ENCODE measurements at regions of chr20 and their contacts with region 1.

Region 1: GRCh38 chr20:39574061-39574460 is 611.9 kb downstream of the DHX35 start:
- DNase-seq: peak; percentile 66
- H3K4me3 ChIP-seq: peak overlapping the region in 1 of 3 experiments; percentile 21
- H3K27ac ChIP-seq: peak overlapping the region; percentile 28
- H3K4me1 ChIP-seq: peaks cover 26% of the 10 kb centered on the region
- H3K27me3 ChIP-seq: no peaks in the 10 kb centered on the region
- CTCF ChIP-seq: no peak
- POLR2A ChIP-seq: no peak

Region 2: GRCh38 chr20:39347626-39348025 is 226.4 kb before region 1 on chr20:
- CTCF ChIA-PET with region 1: no interaction called
- POLR2A ChIA-PET with region 1: no interaction called
- dilution Hi-C with region 1: no loop called
- intact Hi-C with region 1: no loop called
- DNase-seq: no peak
- H3K4me3 ChIP-seq: no peak overlapping the region
- H3K27ac ChIP-seq: no peak overlapping the region
- H3K4me1 ChIP-seq: no peaks in the 10 kb centered on the region
- H3K27me3 ChIP-seq: no peaks in the 10 kb centered on the region
- CTCF ChIP-seq: no peak
- POLR2A ChIP-seq: no peak

Region 3: GRCh38 chr20:39588148-39588757 is 14.2 kb after region 1 on chr20:
- CTCF ChIA-PET with region 1: no interaction called
- POLR2A ChIA-PET with region 1: no interaction called
- dilution Hi-C with region 1: no loop called
- intact Hi-C with region 1: loop called (anchors 2 kb)
- DNase-seq: peak; percentile 89
- H3K4me3 ChIP-seq: peak overlapping the region in 1 of 3 experiments; percentile 24
- H3K27ac ChIP-seq: peak overlapping the region; percentile 74
- H3K4me1 ChIP-seq: peaks cover 21% of the 10 kb centered on the region
- H3K27me3 ChIP-seq: no peaks in the 10 kb centered on the region
- CTCF ChIP-seq: no peak
- POLR2A ChIP-seq: no peak

Region 4: GRCh38 chr20:39661833-39662232 is 87.8 kb after region 1 on chr20:
- CTCF ChIA-PET with region 1: no interaction called
- POLR2A ChIA-PET with region 1: no interaction called
- dilution Hi-C with region 1: no loop called
- intact Hi-C with region 1: loop called (anchors 1 kb)
- DNase-seq: peak; percentile 7
- H3K4me3 ChIP-seq: no peak overlapping the region
- H3K27ac ChIP-seq: no peak overlapping the region
- H3K4me1 ChIP-seq: peaks cover 28% of the 10 kb centered on the region
- H3K27me3 ChIP-seq: no peaks in the 10 kb centered on the region
- CTCF ChIP-seq: no peak
- POLR2A ChIP-seq: no peak

Measured in endothelial cell of umbilical vein (primary cell).